Ascending aorta (tissue), 2 donors: ENCODE measurements at regions of chr13 and their contacts with region 1.

Region 1: DNA sequence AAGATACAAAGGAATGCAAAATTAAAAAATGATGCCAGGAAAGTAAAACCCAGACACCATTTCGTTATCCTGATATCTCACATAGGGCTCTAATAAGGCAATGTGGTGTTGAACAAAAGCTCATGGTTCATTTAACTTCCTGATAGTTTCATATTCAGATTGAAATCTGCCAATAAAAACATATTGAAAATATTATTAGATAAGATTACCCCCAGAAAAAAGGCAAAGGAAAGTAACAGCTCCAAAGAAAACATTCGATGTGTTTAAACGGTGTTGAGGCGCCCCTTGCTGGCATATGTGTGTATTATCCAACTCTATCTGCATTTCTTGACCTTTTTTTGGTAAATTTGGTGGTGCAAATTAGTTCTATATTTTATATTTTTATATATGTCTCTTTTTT is 75.9 kb downstream of the ESD start:
- DNase-seq: peak in 1 of 2 donors; percentile 68
- H3K4me3 ChIP-seq: no peak overlapping the region
- H3K27ac ChIP-seq: peak overlapping the region in 1 of 2 donors; percentile 41
- H3K4me1 ChIP-seq: peaks cover 4 to 8% of the 10 kb centered on the region in 2 donors
- H3K27me3 ChIP-seq: no peaks in the 10 kb centered on the region
- CTCF ChIP-seq: peak; percentile 62 to 83 (median 69)

Region 2: GRCh38 chr13:45851171-45851921 is 869.7 kb before region 1 on chr13 and contains the start of gene SIAH3:
- intact Hi-C with region 1: no loop called
- DNase-seq: no peak
- H3K4me3 ChIP-seq: peak within 1 kb of the TSS; percentile 45 to 53
- H3K27ac ChIP-seq: no peak within 1 kb of the TSS
- H3K4me1 ChIP-seq: peaks cover 3 to 11% of the 10 kb centered on the region in 2 donors
- H3K27me3 ChIP-seq: no peaks in the 10 kb centered on the region
- CTCF ChIP-seq: no peak
- total RNA-seq, gene SIAH3: not detected

Region 3: GRCh38 chr13:46149272-46150133 is 571.6 kb before region 1 on chr13:
- intact Hi-C with region 1: loop called (anchors 10 kb)
- DNase-seq: no peak
- H3K4me3 ChIP-seq: no peak overlapping the region
- H3K27ac ChIP-seq: no peak overlapping the region
- H3K4me1 ChIP-seq: no peaks in the 10 kb centered on the region
- H3K27me3 ChIP-seq: no peaks in the 10 kb centered on the region
- CTCF ChIP-seq: no peak

Region 4: DNA sequence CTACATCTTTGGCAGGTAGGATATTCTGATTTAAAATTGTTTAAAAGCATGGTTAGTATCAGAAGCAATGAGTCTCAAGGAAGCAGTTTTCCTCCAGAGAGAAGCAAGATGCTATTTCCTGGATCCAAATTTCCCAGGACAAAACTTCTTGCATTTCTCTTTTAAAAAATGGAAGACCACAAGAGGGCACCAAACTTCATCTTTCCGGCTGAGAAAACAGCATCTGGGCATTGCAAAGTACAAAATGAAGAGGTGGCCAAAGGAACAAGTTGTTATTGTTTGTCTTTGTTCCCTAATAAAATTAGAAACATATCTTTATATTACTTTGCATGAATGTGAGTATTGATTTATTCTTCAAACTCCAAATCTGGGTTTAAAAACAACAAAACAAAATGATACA is 228.1 kb before region 1 on chr13:
- intact Hi-C with region 1: loop called (anchors 1 kb)
- DNase-seq: no peak
- H3K4me3 ChIP-seq: no peak overlapping the region
- H3K27ac ChIP-seq: peak overlapping the region in 1 of 2 donors; percentile 32
- H3K4me1 ChIP-seq: peaks cover 5 to 23% of the 10 kb centered on the region in 2 donors
- H3K27me3 ChIP-seq: no peaks in the 10 kb centered on the region
- CTCF ChIP-seq: peak; percentile 42 to 72 (median 60)

Region 5: DNA sequence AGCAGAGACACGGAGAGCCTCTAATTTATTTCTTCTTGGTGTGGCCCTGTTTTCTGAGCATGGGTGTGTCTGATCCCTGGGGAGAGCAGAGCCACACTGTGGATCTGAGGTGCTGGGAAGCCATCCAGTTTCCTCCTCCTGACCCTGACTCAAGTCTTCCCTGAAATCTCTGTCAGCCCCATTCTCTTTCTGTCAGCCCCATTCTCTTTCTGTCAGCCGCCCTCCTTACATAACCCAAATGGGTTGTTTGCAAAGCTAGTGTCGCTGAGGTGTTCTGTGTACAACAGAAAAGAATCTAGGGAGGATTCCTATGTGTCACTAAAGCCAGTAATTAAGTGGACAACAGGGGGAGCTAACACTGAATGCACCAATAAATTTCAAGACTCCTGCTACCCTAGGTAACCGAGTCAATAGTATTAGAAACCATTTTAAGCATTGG is 117.9 kb before region 1 on chr13:
- intact Hi-C with region 1: loop called (anchors 5 kb)
- DNase-seq: no peak
- H3K4me3 ChIP-seq: no peak overlapping the region
- H3K27ac ChIP-seq: no peak overlapping the region
- H3K4me1 ChIP-seq: peaks cover 2 to 69% of the 10 kb centered on the region in 2 donors
- H3K27me3 ChIP-seq: no peaks in the 10 kb centered on the region
- CTCF ChIP-seq: no peak

Region 6: GRCh38 chr13:46751811-46752635 is 31.0 kb after region 1 on chr13:
- intact Hi-C with region 1: no loop called
- DNase-seq: no peak
- H3K4me3 ChIP-seq: no peak overlapping the region
- H3K27ac ChIP-seq: no peak overlapping the region
- H3K4me1 ChIP-seq: peaks cover 0 to 4% of the 10 kb centered on the region in 2 donors
- H3K27me3 ChIP-seq: no peaks in the 10 kb centered on the region
- CTCF ChIP-seq: no peak